Left lung (tissue), 14 donors: ENCODE measurements at regions of chr2 and their contacts with region 1.

Region 1: DNA sequence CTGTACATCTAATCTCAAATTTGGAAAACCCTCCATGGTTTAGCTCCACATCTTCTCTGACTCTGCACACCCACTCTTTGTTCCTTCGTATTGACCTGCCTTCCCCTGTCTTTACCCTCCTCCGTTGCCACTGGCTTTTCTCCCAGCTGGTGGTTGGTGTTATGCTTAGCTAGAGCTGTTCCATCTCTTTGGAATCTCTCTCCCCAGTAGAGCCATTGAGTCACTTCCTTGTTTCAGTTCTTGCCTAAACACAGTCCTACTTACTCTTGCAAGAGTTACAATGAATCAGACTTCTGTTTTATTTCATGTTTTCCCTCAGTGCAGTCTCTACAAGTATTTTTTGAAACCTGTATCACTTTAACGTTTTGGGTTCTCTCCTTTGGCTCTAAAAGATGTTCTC is 263.9 kb downstream of the LTBP1 start:
- DNase-seq: peak in 1 of 4 donors; percentile 39
- ATAC-seq: peak; percentile 69
- H3K4me3 ChIP-seq: no peak overlapping the region
- H3K27ac ChIP-seq: peak overlapping the region in 1 of 2 donors; percentile 26
- H3K4me1 ChIP-seq: no peaks in the 10 kb centered on the region
- H3K27me3 ChIP-seq: no peaks in the 10 kb centered on the region
- CTCF ChIP-seq: no peak

Region 2: GRCh38 chr2:33166287-33166881 is 44.2 kb before region 1 on chr2:
- intact Hi-C with region 1: loop called in 1 of 2 experiments (anchors 10 kb)
- DNase-seq: no peak
- ATAC-seq: no peak
- H3K4me3 ChIP-seq: no peak overlapping the region
- H3K27ac ChIP-seq: no peak overlapping the region
- H3K4me1 ChIP-seq: no peaks in the 10 kb centered on the region
- H3K27me3 ChIP-seq: no peaks in the 10 kb centered on the region
- CTCF ChIP-seq: no peak